ENCODE measurements at regions of chr13 and their contacts with region 1.

Region 1: GRCh38 chr13:100039740-100040139 is 49.2 kb upstream of the PCCA start:
- DNase-seq: no peak
- H3K4me3 ChIP-seq: no peak overlapping the region
- H3K27ac ChIP-seq: no peak overlapping the region
- H3K4me1 ChIP-seq: peaks cover 11% of the 10 kb centered on the region
- H3K27me3 ChIP-seq: no peaks in the 10 kb centered on the region
- CTCF ChIP-seq: no peak

Region 2: DNA sequence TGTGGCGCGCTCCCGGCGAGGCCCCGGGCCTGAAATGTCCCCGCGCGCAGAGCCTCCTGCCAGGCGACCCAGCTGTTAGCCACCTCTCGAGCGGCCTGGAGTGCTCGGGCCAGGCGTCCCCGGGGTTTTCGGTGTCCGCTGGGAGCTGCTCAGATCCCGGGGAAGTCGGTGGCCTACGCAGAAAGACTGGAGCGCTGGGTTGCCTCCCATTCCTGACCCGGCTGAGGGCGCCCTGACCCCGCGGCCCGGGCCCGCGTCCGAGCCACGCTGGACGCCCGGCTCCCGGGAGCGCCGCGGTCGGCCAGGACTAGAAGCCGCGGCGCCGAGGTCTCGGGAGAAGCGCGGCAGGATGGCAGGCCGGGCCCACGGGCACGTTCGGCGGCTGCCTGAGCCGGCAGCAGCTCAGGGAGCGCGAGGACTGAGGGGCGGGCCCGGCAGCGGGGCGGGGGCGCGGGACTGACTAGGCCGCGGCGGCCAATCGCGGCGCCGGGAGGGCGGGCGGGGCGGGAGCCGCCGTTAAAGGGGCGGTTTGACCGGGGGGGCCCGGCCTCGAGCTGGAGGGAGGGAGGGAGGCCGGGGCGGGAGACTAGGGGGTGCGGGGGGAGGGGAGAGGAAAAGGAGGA is 59.4 kb before region 1 on chr13:
- CTCF ChIA-PET with region 1: no interaction called
- POLR2A ChIA-PET with region 1: interaction called, 17 read pairs
- intact Hi-C with region 1: no loop called
- DNase-seq: peak; percentile 96
- H3K4me3 ChIP-seq: peak overlapping the region; percentile 95
- H3K27ac ChIP-seq: peak overlapping the region; percentile 97
- H3K4me1 ChIP-seq: peaks cover 5% of the 10 kb centered on the region
- H3K27me3 ChIP-seq: no peaks in the 10 kb centered on the region
- CTCF ChIP-seq: no peak

Region 3: DNA sequence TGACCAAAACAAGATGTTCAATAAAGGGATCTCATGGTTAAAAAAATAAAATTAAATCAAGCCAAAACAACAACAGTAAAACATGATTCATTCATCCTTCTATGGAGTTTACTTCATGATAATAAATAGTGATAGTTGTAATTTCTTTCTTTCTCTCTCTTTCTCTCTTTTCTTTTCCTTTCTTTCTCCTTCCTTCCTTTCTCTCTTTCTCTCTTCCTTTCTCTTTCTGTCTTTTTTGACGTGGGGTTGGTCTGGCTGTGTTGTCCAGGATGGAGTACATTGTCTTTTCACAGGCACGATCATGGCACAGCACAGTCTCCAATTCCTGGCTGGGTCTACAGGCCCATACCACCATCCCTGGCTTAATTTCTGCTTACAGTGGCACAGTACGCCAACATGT is 20.1 kb after region 1 on chr13:
- CTCF ChIA-PET with region 1: no interaction called
- POLR2A ChIA-PET with region 1: interaction called, 13 read pairs
- intact Hi-C with region 1: no loop called
- DNase-seq: no peak
- H3K4me3 ChIP-seq: no peak overlapping the region
- H3K27ac ChIP-seq: no peak overlapping the region
- H3K4me1 ChIP-seq: no peaks in the 10 kb centered on the region
- H3K27me3 ChIP-seq: no peaks in the 10 kb centered on the region
- CTCF ChIP-seq: no peak

Region 4: GRCh38 chr13:100069278-100069677 is 29.5 kb after region 1 on chr13:
- CTCF ChIA-PET with region 1: no interaction called
- POLR2A ChIA-PET with region 1: interaction called, 10 read pairs
- intact Hi-C with region 1: no loop called
- DNase-seq: no peak
- H3K4me3 ChIP-seq: no peak overlapping the region
- H3K27ac ChIP-seq: no peak overlapping the region
- H3K4me1 ChIP-seq: no peaks in the 10 kb centered on the region
- H3K27me3 ChIP-seq: no peaks in the 10 kb centered on the region
- CTCF ChIP-seq: no peak

Region 5: DNA sequence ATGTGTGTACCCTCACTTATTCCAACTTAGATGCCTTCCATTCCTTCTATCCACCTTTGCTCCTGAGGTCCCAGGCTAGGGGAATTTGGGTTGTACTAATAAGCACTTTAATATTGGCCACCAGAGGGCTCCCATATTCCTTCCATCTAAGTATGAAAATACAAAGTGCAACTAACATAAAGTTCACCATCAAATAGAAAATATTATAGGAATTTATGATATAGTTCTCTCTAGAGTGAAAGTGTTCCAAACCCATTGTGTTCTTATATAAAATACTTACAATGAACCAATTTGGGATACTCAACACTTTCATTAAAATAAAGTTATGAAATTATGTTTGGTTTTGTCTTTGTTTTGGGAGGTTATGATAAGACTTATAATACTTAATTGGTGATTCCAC is 1475.0 kb after region 1 on chr13:
- CTCF ChIA-PET with region 1: no interaction called
- POLR2A ChIA-PET with region 1: no interaction called
- intact Hi-C with region 1: no loop called
- DNase-seq: peak; percentile 68
- H3K4me3 ChIP-seq: no peak overlapping the region
- H3K27ac ChIP-seq: no peak overlapping the region
- H3K4me1 ChIP-seq: peaks cover 36% of the 10 kb centered on the region
- H3K27me3 ChIP-seq: no peaks in the 10 kb centered on the region
- CTCF ChIP-seq: peak; percentile 85

Measured in A673 (cell line).